K562 (cell line): ENCODE measurements at regions of chr11 and their contacts with region 1.

Region 1: DNA sequence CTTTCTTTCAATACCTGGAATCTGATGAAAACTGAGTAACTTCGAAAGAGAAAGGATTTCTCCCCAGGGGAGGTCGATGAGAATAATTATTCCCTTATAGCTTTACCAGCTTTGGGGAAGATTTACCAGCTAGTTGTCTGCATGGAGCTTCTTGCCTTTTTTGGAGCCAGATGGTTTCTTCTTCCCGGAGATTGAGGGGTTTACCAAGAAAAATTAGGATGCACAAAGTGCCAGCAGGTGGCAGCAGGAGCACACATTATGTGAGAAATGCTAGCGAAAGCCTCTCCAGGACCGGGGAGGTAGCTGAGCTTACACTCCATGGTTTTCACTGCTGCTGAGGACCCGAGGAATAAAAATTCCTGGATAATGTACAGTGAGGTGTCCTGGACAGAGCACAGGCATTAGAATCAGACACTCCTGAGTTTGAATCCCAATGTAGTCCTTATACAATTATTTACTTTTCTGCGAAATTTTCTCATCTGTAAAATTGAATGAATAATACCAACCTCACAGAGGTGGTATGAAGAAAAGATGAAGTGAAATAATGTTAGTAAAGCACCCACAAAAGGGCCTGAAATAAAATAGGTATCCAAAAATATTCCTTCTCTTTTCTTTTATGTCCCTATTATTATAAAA is 46.0 kb upstream of the PARVA start:
- DNase-seq: peak; percentile 58 to 87 (median 66)
- ATAC-seq: peak; percentile 89
- H3K4me3 ChIP-seq: no peak overlapping the region
- H3K27ac ChIP-seq: no peak overlapping the region
- H3K4me1 ChIP-seq: no peaks in the 10 kb centered on the region; a peak in 1 of 5 replicates
- H3K27me3 ChIP-seq: no peaks in the 10 kb centered on the region; a peak in 1 of 5 replicates
- CTCF ChIP-seq: peak; percentile 74 to 90 (median 77)
- EP300 ChIP-seq: no peak
- POLR2A ChIP-seq: no peak
- RAD21 ChIP-seq: peak; percentile 89 to 91

Region 2: GRCh38 chr11:12185914-12186313 is 145.4 kb before region 1 on chr11:
- CTCF ChIA-PET with region 1: no interaction called
- POLR2A ChIA-PET with region 1: no interaction called
- in situ Hi-C with region 1: no loop called
- intact Hi-C with region 1: no loop called
- DNase-seq: no peak
- ATAC-seq: no peak
- H3K4me3 ChIP-seq: no peak overlapping the region
- H3K27ac ChIP-seq: no peak overlapping the region
- H3K4me1 ChIP-seq: peaks cover 31 to 32% of the 10 kb centered on the region in 2 experiments
- H3K27me3 ChIP-seq: no peaks in the 10 kb centered on the region
- CTCF ChIP-seq: no peak
- EP300 ChIP-seq: no peak
- POLR2A ChIP-seq: no peak
- RAD21 ChIP-seq: no peak

Region 3: DNA sequence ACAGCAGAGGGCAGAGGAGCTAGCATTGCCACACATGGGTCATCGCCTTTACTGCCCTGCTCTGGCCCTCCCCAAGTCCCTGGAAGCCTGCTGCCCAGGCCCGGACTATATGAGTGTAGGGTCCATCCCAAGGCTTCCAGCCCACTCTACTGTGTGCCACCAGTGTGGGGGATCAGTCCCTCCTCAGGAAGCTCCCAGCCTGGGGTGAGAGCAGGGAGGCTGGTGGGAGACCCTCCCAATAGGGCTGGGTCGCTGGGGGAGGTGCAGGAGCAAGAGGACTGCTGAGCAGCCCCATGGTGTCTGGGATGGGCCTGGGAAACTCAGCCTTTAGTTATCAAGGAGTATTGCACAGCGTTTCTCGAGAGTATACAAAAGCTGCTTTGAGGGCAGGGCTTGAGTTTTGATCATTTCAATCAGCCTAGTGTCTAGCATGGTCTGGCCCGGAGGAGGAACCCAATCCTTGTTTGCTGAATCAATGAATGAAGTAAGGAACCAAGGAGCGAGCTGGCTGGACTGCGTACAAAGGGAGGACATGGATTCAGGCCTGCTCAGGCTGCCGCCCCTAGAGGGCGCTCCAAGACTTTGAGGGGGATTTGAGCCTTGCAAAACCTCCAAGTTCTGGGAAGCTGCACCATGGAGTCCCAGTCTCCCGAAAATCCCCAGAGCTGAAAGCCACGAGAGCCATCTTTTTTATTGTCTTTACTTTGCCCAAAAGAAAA is 43.0 kb before region 1 on chr11:
- CTCF ChIA-PET with region 1: interaction called, 3 read pairs
- POLR2A ChIA-PET with region 1: no interaction called
- in situ Hi-C with region 1: no loop called
- intact Hi-C with region 1: loop called (anchors 5 kb)
- DNase-seq: peak; percentile 76 to 85 (median 80)
- ATAC-seq: peak; percentile 90
- H3K4me3 ChIP-seq: no peak overlapping the region
- H3K27ac ChIP-seq: no peak overlapping the region
- H3K4me1 ChIP-seq: peaks cover 15 to 17% of the 10 kb centered on the region in 2 experiments; a peak in 3 of 5 replicates
- H3K27me3 ChIP-seq: no peaks in the 10 kb centered on the region; a peak in 1 of 5 replicates
- CTCF ChIP-seq: peak; percentile 89 to 95 (median 94)
- EP300 ChIP-seq: no peak
- POLR2A ChIP-seq: no peak
- RAD21 ChIP-seq: peak; percentile 73 to 83

Region 4: GRCh38 chr11:12397931-12398334 is 66.6 kb after region 1 on chr11:
- CTCF ChIA-PET with region 1: no interaction called
- POLR2A ChIA-PET with region 1: no interaction called
- in situ Hi-C with region 1: no loop called
- intact Hi-C with region 1: loop called (anchors 5 kb)
- DNase-seq: no peak
- ATAC-seq: no peak
- H3K4me3 ChIP-seq: no peak overlapping the region
- H3K27ac ChIP-seq: no peak overlapping the region
- H3K4me1 ChIP-seq: no peaks in the 10 kb centered on the region
- H3K27me3 ChIP-seq: peaks cover 0 to 7% of the 10 kb centered on the region in 2 experiments; a peak in 1 of 5 replicates
- CTCF ChIP-seq: no peak
- EP300 ChIP-seq: no peak
- POLR2A ChIP-seq: no peak
- RAD21 ChIP-seq: no peak

Region 5: GRCh38 chr11:12478743-12479142 is 147.4 kb after region 1 on chr11:
- CTCF ChIA-PET with region 1: no interaction called
- POLR2A ChIA-PET with region 1: no interaction called
- in situ Hi-C with region 1: no loop called
- intact Hi-C with region 1: loop called (anchors 10 kb)
- DNase-seq: no peak
- ATAC-seq: no peak
- H3K4me3 ChIP-seq: no peak overlapping the region
- H3K27ac ChIP-seq: no peak overlapping the region
- H3K4me1 ChIP-seq: no peaks in the 10 kb centered on the region
- H3K27me3 ChIP-seq: peaks cover 31 to 53% of the 10 kb centered on the region in 2 experiments
- CTCF ChIP-seq: no peak
- EP300 ChIP-seq: no peak
- POLR2A ChIP-seq: no peak
- RAD21 ChIP-seq: no peak

Region 6: GRCh38 chr11:12893787-12894672 is 562.7 kb after region 1 on chr11:
- CTCF ChIA-PET with region 1: interaction called, 15 read pairs
- POLR2A ChIA-PET with region 1: no interaction called
- in situ Hi-C with region 1: no loop called
- intact Hi-C with region 1: loop called (anchors 1 kb)
- DNase-seq: peak; percentile 63 to 65 (median 65)
- ATAC-seq: peak; percentile 90
- H3K4me3 ChIP-seq: no peak overlapping the region
- H3K27ac ChIP-seq: no peak overlapping the region
- H3K4me1 ChIP-seq: peaks cover 0 to 3% of the 10 kb centered on the region in 2 experiments; a peak in 2 of 5 replicates
- H3K27me3 ChIP-seq: no peaks in the 10 kb centered on the region
- CTCF ChIP-seq: peak; percentile 69 to 84 (median 81)
- EP300 ChIP-seq: no peak
- POLR2A ChIP-seq: no peak
- RAD21 ChIP-seq: peak; percentile 78 to 81

Region 7: GRCh38 chr11:13183094-13183825 is 851.9 kb after region 1 on chr11:
- CTCF ChIA-PET with region 1: interaction called, 10 read pairs
- POLR2A ChIA-PET with region 1: no interaction called
- in situ Hi-C with region 1: loop called (anchors 25 kb)
- intact Hi-C with region 1: no loop called
- DNase-seq: peak in 2 of 4 experiments; percentile 17 to 31
- ATAC-seq: peak; percentile 73
- H3K4me3 ChIP-seq: no peak overlapping the region
- H3K27ac ChIP-seq: no peak overlapping the region
- H3K4me1 ChIP-seq: no peaks in the 10 kb centered on the region
- H3K27me3 ChIP-seq: no peaks in the 10 kb centered on the region; a peak in 1 of 5 replicates
- CTCF ChIP-seq: peak; percentile 34 to 65 (median 46); a peak in 4 of 6 replicates
- EP300 ChIP-seq: no peak
- POLR2A ChIP-seq: no peak
- RAD21 ChIP-seq: peak; percentile 68 to 69